ENCODE measurements at regions of chr7 and their contacts with region 1.

Region 1: GRCh38 chr7:128209229-128210035 is 31.6 kb upstream of the LEP start:
- DNase-seq: peak; percentile 69
- H3K4me3 ChIP-seq: no peak overlapping the region
- H3K27ac ChIP-seq: no peak overlapping the region
- H3K4me1 ChIP-seq: no peaks in the 10 kb centered on the region
- H3K27me3 ChIP-seq: no peaks in the 10 kb centered on the region
- CTCF ChIP-seq: peak; percentile 97

Region 2: DNA sequence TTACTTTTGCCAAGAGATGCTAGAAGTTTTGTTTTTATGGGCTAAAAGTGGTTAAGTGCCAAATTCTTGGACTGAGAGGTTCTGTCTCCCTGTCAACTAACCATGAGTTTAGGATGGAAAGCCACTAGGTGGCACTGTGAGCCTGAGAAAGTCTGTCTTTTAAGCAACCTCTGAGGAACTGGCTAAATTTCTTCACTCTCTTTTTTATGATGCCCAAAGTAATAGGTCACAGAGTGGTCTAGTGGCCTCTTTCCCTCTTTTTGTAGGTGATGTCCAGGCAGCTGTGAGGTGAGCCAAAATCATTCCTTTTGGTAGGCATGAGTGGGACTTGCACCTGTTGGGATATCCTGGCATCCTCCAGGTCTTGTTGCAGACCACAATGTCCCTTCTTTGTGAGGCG is 500.6 kb before region 1 on chr7:
- intact Hi-C with region 1: loop called (anchors 2 kb)
- DNase-seq: peak; percentile 79
- H3K4me3 ChIP-seq: no peak overlapping the region
- H3K27ac ChIP-seq: no peak overlapping the region
- H3K4me1 ChIP-seq: no peaks in the 10 kb centered on the region
- H3K27me3 ChIP-seq: no peaks in the 10 kb centered on the region
- CTCF ChIP-seq: peak; percentile 69

Region 3: GRCh38 chr7:128031901-128032604 is 177.4 kb before region 1 on chr7:
- intact Hi-C with region 1: loop called (anchors 10 kb)
- DNase-seq: no peak
- H3K4me3 ChIP-seq: peak overlapping the region; percentile 44
- H3K27ac ChIP-seq: no peak overlapping the region
- H3K4me1 ChIP-seq: no peaks in the 10 kb centered on the region
- H3K27me3 ChIP-seq: peaks cover 8% of the 10 kb centered on the region
- CTCF ChIP-seq: no peak

Region 4: DNA sequence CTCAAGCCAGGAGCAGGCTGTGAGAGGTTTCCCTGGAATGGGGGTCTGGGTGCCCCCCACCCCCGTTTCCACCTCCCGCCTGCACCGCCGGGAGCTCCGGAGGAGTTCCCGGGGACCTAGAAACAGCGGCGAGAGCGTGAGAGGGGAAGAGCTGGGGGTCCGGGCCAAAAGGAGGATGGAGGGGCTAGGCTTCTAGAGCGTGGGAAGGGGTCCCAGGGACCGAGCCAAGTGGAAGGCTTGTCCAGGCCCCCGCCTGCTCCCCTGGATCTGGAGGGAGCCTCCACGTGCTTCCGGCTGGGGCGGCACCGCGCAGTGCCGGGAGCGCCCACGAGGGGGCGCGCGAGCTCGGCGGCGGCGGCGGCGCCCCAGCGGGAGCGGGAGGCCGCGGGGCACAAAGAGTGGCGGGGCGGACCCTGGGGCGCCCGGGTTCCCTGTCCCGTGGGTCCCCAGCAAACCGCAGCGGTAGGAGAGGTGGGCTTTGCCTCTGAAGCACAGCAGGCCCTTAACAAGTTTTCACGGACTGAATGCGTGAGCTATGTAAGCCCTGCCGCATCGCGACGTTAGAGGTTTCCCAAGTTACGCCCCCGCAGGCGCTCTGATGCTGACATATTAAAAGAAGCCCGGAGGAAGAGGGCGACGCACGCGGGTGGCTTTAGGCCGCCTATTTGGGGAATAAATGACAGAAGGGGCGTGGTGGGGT is 73.8 kb before region 1 on chr7:
- intact Hi-C with region 1: loop called (anchors 2 kb)
- DNase-seq: peak; percentile 46
- H3K4me3 ChIP-seq: peak overlapping the region; percentile 43
- H3K27ac ChIP-seq: no peak overlapping the region
- H3K4me1 ChIP-seq: peaks cover 5% of the 10 kb centered on the region
- H3K27me3 ChIP-seq: peaks cover 40% of the 10 kb centered on the region
- CTCF ChIP-seq: peak; percentile 84